A549 (cell line): ENCODE measurements at regions of chr17 and their contacts with region 1.

Region 1: DNA sequence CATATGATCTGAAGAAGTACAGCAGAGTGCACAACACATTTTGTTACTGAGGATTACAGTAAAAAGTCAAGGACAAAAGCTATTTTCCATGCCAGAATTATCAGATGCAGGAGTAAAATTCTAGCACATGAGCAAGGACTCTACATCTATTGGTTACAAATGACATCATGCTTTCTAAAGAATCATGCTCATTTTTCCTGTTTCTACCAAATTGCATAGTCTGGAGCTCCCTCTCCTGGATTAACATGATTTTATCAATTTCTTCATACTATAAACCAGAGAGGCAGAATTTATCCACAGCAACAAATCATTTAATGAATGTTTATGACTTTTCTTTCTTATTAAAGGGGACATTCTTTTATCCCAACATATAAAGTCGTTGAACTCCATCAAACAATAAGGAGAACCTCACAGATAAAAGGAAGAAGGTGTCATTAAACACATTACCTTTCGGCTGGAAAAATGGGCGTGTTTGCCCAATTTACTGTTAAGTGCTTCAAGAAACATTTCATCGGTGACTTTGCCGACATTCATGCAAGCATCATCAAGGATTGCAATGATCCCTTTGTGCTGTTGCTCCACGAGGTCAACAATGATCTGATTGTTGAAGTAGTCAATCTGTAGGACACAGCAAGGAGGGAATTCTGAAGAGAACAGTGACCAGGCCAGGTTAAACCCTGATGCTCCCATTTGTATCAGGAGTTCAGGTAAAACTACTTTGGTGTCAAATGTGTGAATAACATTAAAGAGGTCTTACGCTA is 121.7 kb downstream of the MYO1D start:
- DNase-seq: peak; percentile 55 to 78
- ATAC-seq: peak; percentile 91 to 95
- H3K4me3 ChIP-seq: no peak overlapping the region
- H3K27ac ChIP-seq: no peak overlapping the region
- H3K4me1 ChIP-seq: no peaks in the 10 kb centered on the region
- CTCF ChIP-seq: peak; percentile 86
- EP300 ChIP-seq: no peak
- POLR2A ChIP-seq: no peak
- RAD21 ChIP-seq: peak; percentile 89 to 91

Region 2: DNA sequence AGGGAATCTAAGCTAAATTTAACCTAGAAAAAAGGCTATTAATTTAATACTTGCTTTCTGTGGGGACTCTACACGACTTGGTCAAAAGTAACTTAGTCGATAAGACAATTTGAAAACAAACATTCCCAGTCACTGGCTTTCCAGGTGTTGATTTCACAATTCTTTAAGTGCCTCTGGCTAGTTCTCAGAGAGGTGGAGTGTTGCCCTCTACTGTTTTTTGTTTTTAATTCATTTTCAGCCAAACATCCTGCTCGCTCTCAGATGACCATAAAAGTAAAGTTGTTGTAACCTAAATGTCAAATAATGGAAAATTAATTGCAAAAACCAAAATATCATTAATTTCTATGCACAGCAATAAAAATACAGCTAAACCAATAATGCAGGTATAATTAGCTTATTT is 14.6 kb after region 1 on chr17:
- CTCF ChIA-PET with region 1: interaction called, 14 read pairs
- POLR2A ChIA-PET with region 1: no interaction called
- DNase-seq: peak; percentile 20 to 38
- ATAC-seq: no peak; a peak in 2 of 6 replicates
- H3K4me3 ChIP-seq: no peak overlapping the region
- H3K27ac ChIP-seq: no peak overlapping the region
- H3K4me1 ChIP-seq: peaks cover 19% of the 10 kb centered on the region
- CTCF ChIP-seq: peak; percentile 51
- EP300 ChIP-seq: no peak
- POLR2A ChIP-seq: no peak
- RAD21 ChIP-seq: peak; percentile 43 to 54; a peak in 4 of 5 replicates

Region 3: GRCh38 chr17:32927724-32928585 is 172.7 kb after region 1 on chr17 and contains the start of gene TMEM98:
- CTCF ChIA-PET with region 1: no interaction called
- POLR2A ChIA-PET with region 1: no interaction called
- DNase-seq: no peak
- ATAC-seq: peak; percentile 75
- H3K4me3 ChIP-seq: peak within 1 kb of the TSS; percentile 97
- H3K27ac ChIP-seq: peak within 1 kb of the TSS; percentile 91 to 95
- H3K4me1 ChIP-seq: peaks cover 9% of the 10 kb centered on the region
- CTCF ChIP-seq: no peak
- EP300 ChIP-seq: no peak
- POLR2A ChIP-seq: no peak
- RAD21 ChIP-seq: no peak
- polyA plus RNA-seq, gene TMEM98: 61.0 and 72.6 TPM in 2 replicates